ENCODE measurements at regions of chr19 and their contacts with region 1.

Region 1: GRCh38 chr19:55653758-55654539 is 886 bp upstream of the U2AF2 start:
- DNase-seq: peak; percentile 99
- ATAC-seq: peak; percentile 81
- H3K4me3 ChIP-seq: peak overlapping the region; percentile 71
- H3K27ac ChIP-seq: peak overlapping the region; percentile 98
- H3K4me1 ChIP-seq: peaks cover 12% of the 10 kb centered on the region
- H3K27me3 ChIP-seq: no peaks in the 10 kb centered on the region
- CTCF ChIP-seq: peak; percentile 100
- POLR2A ChIP-seq: peak; percentile 70; the same call in 1 of the 2 replicates
- RAD21 ChIP-seq: peak; percentile 73

Region 2: GRCh38 chr19:55674841-55675660 is 21.1 kb after region 1 on chr19 and contains the start of gene EPN1:
- CTCF ChIA-PET with region 1: interaction called, 5 read pairs
- POLR2A ChIA-PET with region 1: no interaction called
- dilution Hi-C with region 1: no loop called
- in situ Hi-C with region 1: no loop called
- intact Hi-C with region 1: loop called (anchors 2 kb)
- DNase-seq: peak; percentile 96
- ATAC-seq: peak; percentile 87
- H3K4me3 ChIP-seq: peak within 1 kb of the TSS; percentile 80
- H3K27ac ChIP-seq: peak within 1 kb of the TSS; percentile 78
- H3K4me1 ChIP-seq: peaks cover 5% of the 10 kb centered on the region; the same call in 1 of the 2 replicates
- H3K27me3 ChIP-seq: no peaks in the 10 kb centered on the region
- CTCF ChIP-seq: no peak
- POLR2A ChIP-seq: peak; percentile 38; the same call in 1 of the 2 replicates
- RAD21 ChIP-seq: no peak
- total RNA-seq, gene EPN1: 19.0 and 21.9 TPM in 2 replicates

Region 3: DNA sequence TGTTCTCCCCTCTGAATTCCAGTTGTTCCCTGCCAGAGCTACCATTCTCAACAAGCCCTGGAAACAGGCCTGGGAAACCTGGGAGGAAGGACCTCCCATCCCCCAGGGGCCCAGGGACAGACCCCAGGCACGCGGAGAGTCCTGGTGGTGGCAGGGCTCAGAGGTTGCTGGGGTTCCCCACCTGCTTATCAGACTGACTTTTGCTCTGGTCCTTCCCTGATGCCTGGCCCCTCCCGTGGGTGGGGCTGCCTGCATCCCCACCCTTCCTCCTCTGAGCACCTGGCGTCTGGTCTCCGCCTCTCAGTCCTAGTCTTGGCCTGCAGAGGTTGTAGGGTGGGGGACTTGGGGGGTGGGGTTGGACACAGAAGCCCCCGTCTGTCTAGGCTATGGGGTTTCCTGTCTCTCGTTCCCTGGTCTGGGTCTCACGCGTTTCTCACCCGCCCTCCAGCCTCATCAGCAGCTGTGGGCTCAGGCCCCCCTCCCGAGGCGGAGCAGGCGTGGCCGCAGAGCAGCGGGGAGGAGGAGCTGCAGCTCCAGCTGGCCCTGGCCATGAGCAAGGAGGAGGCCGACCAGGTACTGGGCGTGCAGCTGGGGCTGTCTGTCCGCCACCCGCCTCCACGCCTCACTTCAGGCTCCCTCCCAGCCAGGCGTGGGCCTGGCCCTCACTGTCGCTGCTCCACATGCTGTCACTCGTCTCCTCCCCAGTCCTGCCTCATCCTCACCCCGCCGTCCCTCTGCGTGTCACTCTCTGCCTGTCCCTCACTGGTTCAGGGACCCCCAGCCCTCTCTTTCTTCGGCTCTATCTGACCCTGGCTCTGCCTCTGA is 34.7 kb after region 1 on chr19:
- CTCF ChIA-PET with region 1: no interaction called
- POLR2A ChIA-PET with region 1: no interaction called
- dilution Hi-C with region 1: no loop called
- in situ Hi-C with region 1: no loop called
- intact Hi-C with region 1: no loop called
- DNase-seq: no peak
- ATAC-seq: no peak
- H3K4me3 ChIP-seq: no peak overlapping the region
- H3K27ac ChIP-seq: no peak overlapping the region
- H3K4me1 ChIP-seq: no peaks in the 10 kb centered on the region
- H3K27me3 ChIP-seq: no peaks in the 10 kb centered on the region
- CTCF ChIP-seq: no peak
- POLR2A ChIP-seq: no peak
- RAD21 ChIP-seq: no peak

Region 4: DNA sequence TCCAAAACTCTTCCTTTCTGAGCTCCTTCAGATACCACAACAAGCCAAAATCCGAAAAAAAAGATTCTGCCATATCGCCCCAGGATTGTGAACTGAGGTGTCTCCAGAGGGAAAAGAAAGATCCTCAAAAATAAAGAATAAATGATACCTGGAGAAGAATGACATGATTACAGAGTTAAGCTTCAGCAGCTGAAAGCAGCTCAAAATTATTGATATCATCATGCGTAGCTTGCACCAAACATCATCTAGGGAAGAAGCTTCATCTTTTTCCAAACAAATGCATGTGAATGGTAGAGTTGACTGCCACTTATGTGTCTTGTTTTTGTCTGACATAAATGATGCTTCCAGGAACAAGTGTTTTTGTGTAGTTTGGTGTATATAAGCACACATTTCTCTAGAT is 84.4 kb after region 1 on chr19 and contains the start of gene NLRP9:
- CTCF ChIA-PET with region 1: no interaction called
- POLR2A ChIA-PET with region 1: no interaction called
- dilution Hi-C with region 1: no loop called
- in situ Hi-C with region 1: no loop called
- intact Hi-C with region 1: no loop called
- DNase-seq: no peak
- ATAC-seq: no peak
- H3K4me3 ChIP-seq: no peak within 1 kb of the TSS
- H3K27ac ChIP-seq: no peak within 1 kb of the TSS
- H3K4me1 ChIP-seq: no peaks in the 10 kb centered on the region
- H3K27me3 ChIP-seq: no peaks in the 10 kb centered on the region
- CTCF ChIP-seq: no peak
- POLR2A ChIP-seq: no peak
- RAD21 ChIP-seq: no peak
- total RNA-seq, gene NLRP9: not detected in 2 replicates

Region 5: DNA sequence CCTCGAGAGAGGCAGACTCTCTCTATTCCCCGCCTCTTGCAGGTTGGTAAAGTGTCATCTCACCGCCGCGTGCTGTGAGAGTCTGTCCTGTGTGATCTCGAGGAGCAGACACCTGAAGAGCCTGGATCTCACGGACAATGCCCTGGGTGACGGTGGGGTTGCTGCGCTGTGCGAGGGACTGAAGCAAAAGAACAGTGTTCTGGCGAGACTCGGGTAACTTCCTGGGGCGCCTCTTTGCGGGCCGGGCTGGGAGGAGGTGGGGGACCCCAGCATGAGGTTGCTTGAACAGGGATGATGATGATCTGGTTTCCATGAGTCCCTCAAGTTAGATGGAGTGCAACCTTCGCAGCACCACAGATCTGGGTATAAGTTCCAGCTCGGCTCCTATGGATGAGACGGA is 399.6 kb after region 1 on chr19:
- CTCF ChIA-PET with region 1: no interaction called
- POLR2A ChIA-PET with region 1: interaction called, 10 read pairs
- dilution Hi-C with region 1: no loop called
- in situ Hi-C with region 1: no loop called
- intact Hi-C with region 1: no loop called
- DNase-seq: no peak
- ATAC-seq: no peak
- H3K4me3 ChIP-seq: no peak overlapping the region
- H3K27ac ChIP-seq: no peak overlapping the region
- H3K4me1 ChIP-seq: no peaks in the 10 kb centered on the region
- H3K27me3 ChIP-seq: no peaks in the 10 kb centered on the region
- CTCF ChIP-seq: no peak
- POLR2A ChIP-seq: no peak
- RAD21 ChIP-seq: no peak